Heart left ventricle (tissue), 16 donors: ENCODE measurements at regions of chr17 and their contacts with region 1.

Region 1: GRCh38 chr17:17204041-17204591 is 2.0 kb downstream of the PLD6 start:
- DNase-seq: peak in 3 of 5 donors; percentile 50 to 68 (median 53)
- ATAC-seq: peak; percentile 37 to 69 (median 42)
- H3K4me3 ChIP-seq: no peak overlapping the region
- H3K27ac ChIP-seq: peak overlapping the region; percentile 32 to 96 (median 60)
- H3K4me1 ChIP-seq: peaks cover 0 to 62% (median 40%) of the 10 kb centered on the region in 12 donors
- H3K27me3 ChIP-seq: no peaks in the 10 kb centered on the region
- CTCF ChIP-seq: no peak
- POLR2A ChIP-seq: no peak

Region 2: GRCh38 chr17:17151962-17152361 is 52.2 kb before region 1 on chr17:
- intact Hi-C with region 1: loop called in 2 of 10 experiments (anchors 5 kb)
- DNase-seq: peak; percentile 84 to 95 (median 91)
- ATAC-seq: peak; percentile 92 to 97 (median 95)
- H3K4me3 ChIP-seq: no peak overlapping the region
- H3K27ac ChIP-seq: peak overlapping the region; percentile 35 to 90 (median 82)
- H3K4me1 ChIP-seq: peaks cover 12 to 45% (median 27%) of the 10 kb centered on the region in 12 donors
- H3K27me3 ChIP-seq: no peaks in the 10 kb centered on the region
- CTCF ChIP-seq: no peak
- POLR2A ChIP-seq: no peak

Region 3: GRCh38 chr17:17416007-17416399 is 211.9 kb after region 1 on chr17:
- intact Hi-C with region 1: no loop called
- DNase-seq: no peak
- ATAC-seq: peak in 2 of 4 donors; percentile 16 to 41
- H3K4me3 ChIP-seq: no peak overlapping the region
- H3K27ac ChIP-seq: peak overlapping the region; percentile 19 to 82 (median 74)
- H3K4me1 ChIP-seq: peaks cover 0 to 63% (median 33%) of the 10 kb centered on the region in 12 donors
- H3K27me3 ChIP-seq: no peaks in the 10 kb centered on the region
- CTCF ChIP-seq: no peak
- POLR2A ChIP-seq: no peak